ENCODE measurements at regions of chr19 and their contacts with region 1.

Region 1: GRCh38 chr19:18975011-18975410 is 34.0 kb upstream of the HOMER3 start:
- DNase-seq: no peak
- H3K4me3 ChIP-seq: no peak overlapping the region
- H3K27ac ChIP-seq: no peak overlapping the region
- H3K27me3 ChIP-seq: no peaks in the 10 kb centered on the region
- CTCF ChIP-seq: no peak

Region 2: GRCh38 chr19:18649371-18650020 is 325.5 kb before region 1 on chr19:
- intact Hi-C with region 1: loop called in 1 of 2 experiments (anchors 5 kb)
- DNase-seq: peak in 8 of 10 donors; percentile 56 to 73 (median 66)
- H3K4me3 ChIP-seq: peak overlapping the region in 42 of 59 donors; percentile 5 to 48 (median 28)
- H3K27ac ChIP-seq: peak overlapping the region in 57 of 59 donors; percentile 2 to 90 (median 71)
- H3K27me3 ChIP-seq: no peaks in the 10 kb centered on the region
- CTCF ChIP-seq: no peak

Region 3: DNA sequence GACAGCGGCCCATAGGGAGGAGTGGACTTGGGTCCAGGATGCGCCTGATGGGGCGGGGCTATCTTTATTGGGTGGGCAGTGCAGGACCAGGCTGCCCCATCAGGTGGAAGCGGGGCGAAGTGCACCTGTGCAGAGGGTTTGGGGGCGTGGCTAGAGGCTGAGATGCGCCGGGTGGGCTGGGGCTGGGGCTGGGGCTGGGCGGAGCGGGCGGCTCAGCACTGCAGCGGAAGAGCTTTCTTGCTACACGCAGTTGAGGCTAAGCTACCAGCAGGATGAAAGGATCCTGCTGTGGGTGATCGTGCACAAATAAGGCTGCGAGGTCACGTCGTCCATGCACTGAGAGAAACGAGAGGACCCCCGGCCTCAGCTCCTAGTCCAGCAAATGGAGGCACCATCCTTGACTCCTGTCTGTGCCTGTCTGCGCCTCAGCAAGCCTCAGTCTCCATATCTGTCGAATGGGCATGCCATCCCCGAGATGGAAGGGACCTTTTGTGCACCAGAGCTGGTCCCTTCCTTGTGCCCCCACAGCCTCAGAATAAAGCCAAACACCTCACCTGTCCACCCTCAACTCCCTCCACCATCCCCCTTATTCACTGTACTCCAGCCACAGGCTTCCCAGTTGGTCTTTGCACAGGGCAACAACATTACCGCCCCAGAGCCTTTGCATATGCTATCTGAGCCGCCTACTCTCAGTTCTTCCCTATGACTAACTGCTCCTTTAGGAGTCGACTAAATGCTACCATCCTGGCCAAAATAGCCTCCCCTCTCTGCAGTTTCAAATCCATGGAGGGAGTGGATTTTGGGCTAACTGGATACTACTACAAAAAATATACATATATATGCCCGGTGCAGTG is 13.0 kb before region 1 on chr19:
- intact Hi-C with region 1: no loop called
- DNase-seq: no peak
- H3K4me3 ChIP-seq: peak overlapping the region in 1 of 59 donors; percentile 15
- H3K27ac ChIP-seq: no peak overlapping the region
- H3K27me3 ChIP-seq: peaks cover 0 to 18% (median 0%) of the 10 kb centered on the region in 45 donors
- CTCF ChIP-seq: no peak

Region 4: DNA sequence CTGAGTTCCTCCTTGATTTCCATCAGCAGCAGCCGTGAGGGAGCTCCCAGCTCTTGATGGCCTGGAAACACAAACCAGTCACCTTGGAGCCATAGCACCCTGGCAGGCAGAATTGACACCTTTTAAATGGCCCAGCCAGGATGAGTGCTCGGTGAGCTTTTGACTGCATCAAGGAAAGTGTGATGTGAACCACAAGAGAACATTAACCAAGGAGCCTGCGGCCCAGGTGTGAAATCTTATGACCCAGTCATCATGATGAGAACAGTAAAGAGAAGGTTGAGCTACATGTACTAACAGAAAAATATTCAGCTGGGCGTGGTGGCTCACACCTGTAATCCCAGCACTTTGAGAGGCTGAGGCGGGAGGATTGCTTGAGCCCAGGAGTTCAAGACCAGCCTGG is 35.5 kb after region 1 on chr19:
- intact Hi-C with region 1: no loop called
- DNase-seq: no peak
- H3K4me3 ChIP-seq: no peak overlapping the region
- H3K27ac ChIP-seq: peak overlapping the region in 1 of 59 donors; percentile 11
- H3K27me3 ChIP-seq: no peaks in the 10 kb centered on the region
- CTCF ChIP-seq: no peak

Region 5: GRCh38 chr19:19105365-19106055 is 130.5 kb after region 1 on chr19:
- intact Hi-C with region 1: no loop called
- DNase-seq: no peak
- H3K4me3 ChIP-seq: peak overlapping the region in 11 of 59 donors; percentile 13 to 35 (median 32)
- H3K27ac ChIP-seq: peak overlapping the region in 1 of 59 donors; percentile 10
- H3K27me3 ChIP-seq: no peaks in the 10 kb centered on the region
- CTCF ChIP-seq: no peak

Measured in dorsolateral prefrontal cortex (tissue), 120 donors.